ENCODE measurements at regions of chr1 and their contacts with region 1.

Region 1: DNA sequence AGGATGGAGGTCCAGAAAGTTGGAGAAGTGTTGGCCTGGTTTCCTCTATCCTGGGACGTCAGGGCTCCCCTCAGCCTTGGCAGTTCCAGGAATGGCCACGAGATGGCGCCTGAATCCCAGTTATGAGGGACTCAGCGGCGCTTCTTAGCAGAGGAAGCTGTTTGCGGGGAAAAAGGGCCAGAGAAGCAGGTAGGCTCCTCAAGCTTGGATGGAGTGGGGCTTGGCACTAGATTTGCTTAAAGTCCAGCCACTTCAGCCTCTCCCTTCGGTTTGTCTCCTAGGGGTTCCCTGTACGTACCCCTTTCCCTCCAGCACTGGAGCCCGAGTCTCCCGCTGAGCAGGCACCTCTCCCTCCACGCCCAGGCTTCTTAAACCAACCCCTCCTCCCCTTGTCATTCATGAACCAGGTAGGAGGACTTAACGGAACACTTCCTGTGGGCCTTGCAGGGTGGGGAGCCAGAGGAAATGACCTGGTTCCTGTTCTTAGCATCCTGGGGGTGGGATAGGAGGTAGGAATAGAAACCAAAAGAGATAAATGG is 32.0 kb upstream of the TENT5B start:
- DNase-seq: peak; percentile 84
- H3K4me3 Mint-ChIP-seq: no peak overlapping the region
- H3K27ac Mint-ChIP-seq: no peak overlapping the region
- H3K4me1 Mint-ChIP-seq: no peaks in the 10 kb centered on the region
- H3K27me3 Mint-ChIP-seq: no peaks in the 10 kb centered on the region
- CTCF ChIP-seq: peak; percentile 84

Region 2: DNA sequence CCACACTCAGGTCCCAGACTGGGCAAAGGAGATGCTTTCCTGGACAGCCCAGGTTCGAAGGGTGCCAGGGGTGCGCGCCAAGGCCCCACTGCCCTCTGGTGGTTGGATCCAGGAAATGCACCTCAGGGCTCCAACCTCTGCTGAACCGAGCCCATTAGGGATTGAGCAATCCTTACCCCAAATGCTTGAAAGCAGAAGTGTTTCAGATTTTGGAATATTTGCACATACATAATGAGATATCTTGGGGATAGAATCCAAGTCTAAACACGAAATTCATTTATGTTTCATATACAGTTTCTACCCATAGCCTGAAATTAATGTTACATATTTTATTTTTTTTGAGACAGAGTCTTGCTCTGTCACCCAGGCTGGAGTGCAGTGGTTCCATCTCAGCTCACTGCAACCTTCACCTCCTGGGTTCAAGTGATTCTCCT is 52.8 kb after region 1 on chr1:
- CTCF ChIA-PET with region 1: interaction called, 36 read pairs
- intact Hi-C with region 1: loop called (anchors 1 kb)
- DNase-seq: peak; percentile 82
- H3K4me3 Mint-ChIP-seq: no peak overlapping the region
- H3K27ac Mint-ChIP-seq: no peak overlapping the region
- H3K4me1 Mint-ChIP-seq: peaks cover 15% of the 10 kb centered on the region
- H3K27me3 Mint-ChIP-seq: no peaks in the 10 kb centered on the region
- CTCF ChIP-seq: peak; percentile 77

Region 3: GRCh38 chr1:27192039-27192529 is 147.4 kb after region 1 on chr1:
- CTCF ChIA-PET with region 1: no interaction called
- intact Hi-C with region 1: loop called (anchors 10 kb)
- DNase-seq: peak; percentile 49
- H3K4me3 Mint-ChIP-seq: no peak overlapping the region
- H3K27ac Mint-ChIP-seq: peak overlapping the region; percentile 88
- H3K4me1 Mint-ChIP-seq: peaks cover 29% of the 10 kb centered on the region
- H3K27me3 Mint-ChIP-seq: no peaks in the 10 kb centered on the region
- CTCF ChIP-seq: no peak